Activated B cell treated with CpG ODN at 0.5 μM for 24 hours (primary cell): ENCODE measurements at regions of chr2 and their contacts with region 1.

Region 1: GRCh38 chr2:99827296-99827999 is 314.9 kb downstream of the AFF3 start:
- DNase-seq: no peak
- ATAC-seq: peak; percentile 61
- H3K4me3 Mint-ChIP-seq: peak overlapping the region; percentile 29
- H3K27ac Mint-ChIP-seq: peak overlapping the region; percentile 71
- H3K4me1 Mint-ChIP-seq: peaks cover 33% of the 10 kb centered on the region
- H3K27me3 Mint-ChIP-seq: no peaks in the 10 kb centered on the region
- CTCF ChIP-seq: no peak

Region 2: GRCh38 chr2:99772591-99773331 is 54.7 kb before region 1 on chr2:
- CTCF ChIA-PET with region 1: no interaction called
- POLR2A ChIA-PET with region 1: interaction called, 11 read pairs
- intact Hi-C with region 1: no loop called
- DNase-seq: no peak
- ATAC-seq: peak; percentile 34
- H3K4me3 Mint-ChIP-seq: peak overlapping the region; percentile 45
- H3K27ac Mint-ChIP-seq: peak overlapping the region; percentile 83
- H3K4me1 Mint-ChIP-seq: peaks cover 57% of the 10 kb centered on the region
- H3K27me3 Mint-ChIP-seq: no peaks in the 10 kb centered on the region
- CTCF ChIP-seq: no peak